Posterior vena cava (tissue), 2 donors: ENCODE measurements at regions of chr1 and their contacts with region 1.

Region 1: GRCh38 chr1:230807029-230807428 is 59.8 kb downstream of the CAPN9 start:
- DNase-seq: no peak

Region 2: GRCh38 chr1:230761196-230762167 is 45.5 kb before region 1 on chr1:
- intact Hi-C with region 1: loop called in 1 of 2 experiments (anchors 1 kb)
- DNase-seq: no peak